AG04449 (cell line): ENCODE measurements at regions of chr10 and their contacts with region 1.

Region 1: DNA sequence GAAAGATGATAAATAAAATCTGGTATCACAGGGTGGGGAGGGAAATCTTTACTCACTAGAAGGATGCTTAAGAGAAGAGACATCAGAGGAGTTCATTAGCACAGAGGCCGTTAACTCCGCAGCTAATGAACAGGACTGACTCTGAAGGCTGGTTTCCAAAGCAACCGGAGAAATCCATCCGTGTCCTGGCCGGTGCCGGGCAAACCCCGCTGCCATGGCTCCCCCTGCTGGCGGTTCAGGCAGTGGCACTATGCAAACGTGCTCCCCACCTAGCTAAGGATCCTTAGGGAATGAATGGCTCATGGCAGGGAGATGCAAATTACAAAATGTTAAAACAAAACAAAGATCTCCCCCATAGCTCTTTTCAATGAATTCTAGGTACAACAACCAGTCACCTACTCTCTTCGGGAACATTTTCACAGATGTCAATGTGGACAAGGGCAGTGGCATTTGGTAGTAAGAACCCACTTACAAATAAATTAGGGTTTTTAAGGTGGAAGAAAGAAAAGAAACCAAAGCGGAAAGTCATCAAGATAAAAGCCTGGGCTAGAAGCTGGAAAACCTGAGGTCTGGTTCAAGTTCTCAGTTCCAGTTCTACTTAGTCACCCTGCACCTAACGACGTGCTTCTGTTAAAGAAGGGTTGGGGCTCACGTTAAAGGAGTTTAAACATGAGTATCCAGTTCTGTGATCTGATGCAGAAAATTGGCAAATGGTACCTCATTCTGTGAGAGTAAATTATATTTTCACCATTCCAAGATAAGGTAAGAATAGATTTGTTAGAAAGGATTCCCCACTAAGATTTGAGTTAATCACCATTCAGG is 138.2 kb downstream of the SVIL start:
- DNase-seq: no peak
- H3K4me3 ChIP-seq: no peak overlapping the region
- CTCF ChIP-seq: peak; percentile 96

Region 2: GRCh38 chr10:29370097-29371092 is 126.2 kb before region 1 on chr10:
- CTCF ChIA-PET with region 1: interaction called, 12 read pairs
- POLR2A ChIA-PET with region 1: no interaction called
- DNase-seq: no peak
- H3K4me3 ChIP-seq: no peak overlapping the region
- CTCF ChIP-seq: no peak

Region 3: GRCh38 chr10:29386342-29386999 is 110.1 kb before region 1 on chr10:
- CTCF ChIA-PET with region 1: interaction called, 42 read pairs
- POLR2A ChIA-PET with region 1: no interaction called
- DNase-seq: no peak
- H3K4me3 ChIP-seq: no peak overlapping the region
- CTCF ChIP-seq: peak; percentile 43

Region 4: GRCh38 chr10:29446327-29446726 is 50.2 kb before region 1 on chr10:
- CTCF ChIA-PET with region 1: interaction called, 14 read pairs
- POLR2A ChIA-PET with region 1: no interaction called
- DNase-seq: no peak
- H3K4me3 ChIP-seq: no peak overlapping the region
- CTCF ChIP-seq: no peak

Region 5: DNA sequence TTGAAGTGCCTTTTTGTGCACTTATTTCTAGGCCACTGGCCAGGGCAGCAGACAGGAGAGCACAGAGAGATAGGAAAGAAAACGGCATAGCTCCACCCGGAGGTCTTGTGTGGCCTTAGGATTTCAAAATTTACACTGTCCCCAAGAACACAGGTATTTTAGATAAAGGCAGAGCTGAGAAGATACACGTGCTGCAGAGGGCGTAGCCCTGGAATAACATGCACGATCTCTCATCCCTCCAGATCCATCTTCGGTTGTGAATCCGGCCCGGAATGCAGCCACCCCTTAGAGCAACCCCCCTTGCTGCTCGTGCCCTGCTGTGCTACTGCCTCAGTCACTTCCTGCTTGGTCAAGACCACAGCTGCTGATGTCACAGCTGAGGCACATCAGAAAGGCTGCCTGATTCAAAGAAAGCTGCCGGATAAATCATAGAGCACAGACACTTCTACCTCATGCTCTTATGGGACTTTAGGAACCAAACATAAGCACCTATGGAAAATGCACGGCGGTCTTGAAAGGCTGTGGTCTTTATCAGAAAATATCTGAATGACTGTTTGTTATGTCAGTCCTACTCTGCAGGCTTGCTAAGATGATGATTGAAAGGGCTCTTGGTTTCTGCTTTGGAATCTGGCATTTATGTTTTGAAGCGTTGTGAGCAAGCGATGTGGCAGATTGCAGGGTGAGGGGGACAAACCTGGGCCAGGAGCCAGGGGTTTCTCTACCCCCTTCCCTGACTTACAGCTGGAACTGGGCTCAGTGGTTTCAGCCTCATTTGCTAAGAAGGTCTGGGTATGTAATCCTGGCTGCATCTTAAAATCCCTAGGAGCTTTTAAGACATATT is 13.7 kb before region 1 on chr10:
- CTCF ChIA-PET with region 1: interaction called, 59 read pairs
- POLR2A ChIA-PET with region 1: no interaction called
- DNase-seq: no peak
- H3K4me3 ChIP-seq: no peak overlapping the region; the same call in 1 of the 2 replicates
- CTCF ChIP-seq: no peak

Region 6: GRCh38 chr10:29517352-29517923 is 20.9 kb after region 1 on chr10:
- CTCF ChIA-PET with region 1: interaction called, 65 read pairs
- POLR2A ChIA-PET with region 1: no interaction called
- DNase-seq: no peak
- H3K4me3 ChIP-seq: no peak overlapping the region
- CTCF ChIP-seq: peak; percentile 52

Region 7: DNA sequence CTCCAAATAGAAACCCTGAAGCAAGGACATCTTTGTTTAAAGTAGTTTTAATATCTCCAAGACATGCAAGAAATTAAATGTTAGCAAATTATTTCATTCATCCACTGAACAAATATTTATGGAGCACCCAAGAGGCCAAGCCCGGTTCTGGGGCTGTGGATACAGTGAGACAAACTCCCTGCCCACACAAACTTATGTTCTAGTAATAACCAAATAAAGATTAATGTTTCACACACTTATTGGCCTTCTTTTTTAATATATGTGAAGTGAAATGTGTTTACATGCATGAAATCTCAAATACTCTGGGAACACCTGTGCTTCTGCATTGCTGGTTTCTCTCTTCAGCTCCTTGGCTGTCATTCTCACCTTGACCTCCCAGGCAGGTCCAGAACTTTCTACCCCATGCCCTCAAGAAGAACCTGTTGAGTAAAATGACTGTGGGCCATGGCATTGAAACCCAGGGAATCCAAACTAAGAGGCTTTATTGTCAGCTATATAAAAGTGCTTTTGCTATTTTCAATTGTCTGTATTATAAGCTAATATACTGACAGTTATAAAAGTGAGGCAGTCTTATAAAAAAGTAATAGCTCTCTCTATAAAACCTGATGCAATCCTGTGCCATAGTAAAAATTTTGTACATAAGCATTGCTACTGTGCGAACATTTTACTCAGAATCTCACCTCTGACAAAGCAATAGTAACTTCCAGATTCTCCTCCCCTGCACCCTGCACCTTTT is 94.5 kb after region 1 on chr10:
- CTCF ChIA-PET with region 1: interaction called, 19 read pairs
- POLR2A ChIA-PET with region 1: no interaction called
- DNase-seq: no peak
- H3K4me3 ChIP-seq: no peak overlapping the region
- CTCF ChIP-seq: no peak